GM23248 (cell line): ENCODE measurements at regions of chr11 and their contacts with region 1.

Region 1: DNA sequence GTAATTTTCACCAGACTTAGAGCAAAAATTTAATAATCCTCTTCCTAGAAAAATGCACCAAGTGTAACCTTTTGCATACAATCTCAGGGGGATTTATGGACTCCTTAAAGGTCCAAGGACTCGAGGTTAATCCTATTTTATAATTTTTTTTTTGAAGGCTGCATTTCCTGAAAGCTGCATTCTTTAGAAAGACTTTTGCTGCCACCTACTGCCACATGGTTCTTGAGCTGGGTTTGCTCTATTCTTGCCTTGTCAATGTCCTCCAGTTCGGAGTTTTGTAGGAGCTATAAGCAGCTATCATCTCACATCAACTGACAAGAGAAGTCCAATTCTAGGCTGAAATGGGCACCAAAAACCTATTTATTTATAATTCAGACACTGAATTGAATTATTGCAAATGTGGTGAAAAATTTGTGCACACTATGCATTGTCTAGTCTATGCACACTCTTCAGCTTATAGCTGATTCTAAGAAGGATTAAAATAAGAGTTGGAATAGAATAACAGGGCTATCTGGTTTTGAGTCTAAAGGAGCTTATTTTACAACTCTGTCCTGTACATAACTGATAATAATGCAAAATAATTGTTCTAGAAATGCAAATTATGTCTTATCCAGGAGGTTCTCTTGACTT is 31.3 kb downstream of the TRAF6 start:
- DNase-seq: peak; percentile 76
- H3K4me3 ChIP-seq: no peak overlapping the region
- H3K27ac ChIP-seq: no peak overlapping the region
- H3K4me1 ChIP-seq: peaks cover 16% of the 10 kb centered on the region
- H3K27me3 ChIP-seq: no peaks in the 10 kb centered on the region

Region 2: DNA sequence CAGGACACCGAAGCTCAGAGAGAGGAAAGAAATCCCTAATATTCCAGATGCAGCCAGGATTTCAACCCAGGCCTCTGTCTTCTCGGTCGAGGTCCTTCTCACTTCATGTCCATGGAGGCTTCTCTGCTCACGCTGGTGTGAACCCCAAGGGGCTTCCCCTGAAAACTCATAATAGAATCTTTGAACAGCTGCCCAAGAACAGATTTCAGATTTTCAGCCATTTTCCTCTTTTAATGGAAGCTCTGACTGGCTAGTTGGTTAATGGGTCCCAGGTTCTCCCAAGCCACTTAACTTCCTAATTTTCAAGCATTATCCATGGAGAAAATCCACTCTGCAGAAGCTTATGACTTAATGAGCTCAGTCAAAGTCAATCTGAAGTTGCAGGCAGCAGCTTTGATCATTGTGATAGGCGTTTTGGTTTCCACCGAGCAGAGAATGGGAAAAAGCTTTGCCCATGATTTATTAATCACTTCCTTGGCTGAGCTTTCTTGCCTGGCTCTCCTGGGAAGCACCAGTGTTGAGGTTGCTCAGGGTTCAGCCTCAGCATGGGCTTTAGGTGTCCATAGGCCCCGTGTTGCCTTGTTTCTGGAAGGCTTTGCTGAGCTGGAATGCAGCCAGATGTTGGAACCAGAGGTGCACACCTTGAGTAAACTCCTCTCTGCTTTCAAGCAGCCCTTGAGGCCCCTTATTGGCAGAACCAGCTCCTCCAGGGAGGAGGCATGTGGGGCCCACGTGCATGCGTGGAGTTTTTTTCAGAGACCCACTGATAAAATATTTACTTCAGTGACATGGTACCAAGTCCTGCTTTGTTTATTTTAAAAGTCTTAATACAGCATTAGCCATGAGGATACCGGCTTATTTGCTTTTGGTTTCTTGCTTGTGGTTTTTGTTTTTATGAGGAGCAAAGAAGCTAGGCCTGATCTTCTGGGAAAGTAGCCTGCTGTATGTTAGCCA is 509.4 kb before region 1 on chr11:
- in situ Hi-C with region 1: no loop called
- DNase-seq: no peak
- H3K4me3 ChIP-seq: no peak overlapping the region
- H3K27ac ChIP-seq: no peak overlapping the region
- H3K4me1 ChIP-seq: no peaks in the 10 kb centered on the region
- H3K27me3 ChIP-seq: no peaks in the 10 kb centered on the region

Region 3: DNA sequence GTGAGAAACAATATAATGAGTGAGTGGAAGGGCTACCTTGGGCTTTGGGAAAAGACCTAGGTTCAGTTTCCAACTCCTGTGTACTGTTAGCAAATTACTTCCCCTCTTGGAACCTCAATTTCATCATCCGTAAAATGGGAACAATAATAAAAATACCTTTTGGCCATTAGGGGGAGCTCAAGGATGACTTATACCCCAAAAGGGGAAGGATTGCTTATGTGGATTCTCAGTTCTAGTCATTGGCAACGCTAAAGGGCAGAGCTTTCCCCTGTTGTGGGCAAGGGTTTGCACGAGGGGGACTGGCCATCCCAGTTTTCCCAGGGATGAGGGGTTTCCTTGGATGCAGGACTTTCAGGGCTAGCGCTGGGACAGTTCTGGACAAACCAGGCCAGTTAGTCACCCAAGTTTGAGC is 186.5 kb before region 1 on chr11:
- in situ Hi-C with region 1: loop called (anchors 10 kb)
- DNase-seq: peak; percentile 67
- H3K4me3 ChIP-seq: no peak overlapping the region
- H3K27ac ChIP-seq: no peak overlapping the region
- H3K4me1 ChIP-seq: peaks cover 15% of the 10 kb centered on the region
- H3K27me3 ChIP-seq: no peaks in the 10 kb centered on the region

Region 4: GRCh38 chr11:36376888-36377758 is 101.7 kb before region 1 on chr11:
- in situ Hi-C with region 1: no loop called
- DNase-seq: peak; percentile 81
- H3K4me3 ChIP-seq: peak overlapping the region; percentile 89
- H3K27ac ChIP-seq: 0 out of 2 replicates have a peak overlapping the region, but pooled peaks have one; percentile 13
- H3K4me1 ChIP-seq: peaks cover 19% of the 10 kb centered on the region
- H3K27me3 ChIP-seq: no peaks in the 10 kb centered on the region